ENCODE measurements at regions of chr11 and their contacts with region 1.

Region 1: DNA sequence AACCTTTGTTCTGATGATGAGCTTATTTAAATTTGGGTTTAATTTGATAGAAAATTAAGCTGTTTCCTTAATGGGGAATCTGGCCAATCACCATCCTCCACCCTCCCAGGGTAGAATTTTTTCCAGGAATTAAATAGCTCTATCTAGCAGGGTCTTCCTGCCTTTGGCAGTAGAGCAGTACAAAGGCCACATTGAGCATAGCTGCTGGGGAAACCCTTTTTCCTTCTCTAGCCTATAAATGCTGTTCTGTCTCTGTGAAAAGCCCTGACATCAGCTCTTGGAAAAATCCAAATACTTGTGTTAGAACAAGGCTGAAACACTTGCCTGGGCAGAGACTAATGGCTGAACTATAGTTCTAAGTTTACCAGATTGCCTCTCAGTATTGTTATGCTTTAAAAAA is 55.1 kb downstream of the ARHGEF12 start:
- DNase-seq: no peak
- ATAC-seq: peak; percentile 57

Region 2: GRCh38 chr11:120344302-120345004 is 46.8 kb before region 1 on chr11:
- intact Hi-C with region 1: loop called (anchors 10 kb)
- DNase-seq: no peak
- ATAC-seq: no peak

Measured in left ventricle myocardium superior (tissue), 1 donor.